ENCODE measurements at regions of chr4 and their contacts with region 1.

Region 1: DNA sequence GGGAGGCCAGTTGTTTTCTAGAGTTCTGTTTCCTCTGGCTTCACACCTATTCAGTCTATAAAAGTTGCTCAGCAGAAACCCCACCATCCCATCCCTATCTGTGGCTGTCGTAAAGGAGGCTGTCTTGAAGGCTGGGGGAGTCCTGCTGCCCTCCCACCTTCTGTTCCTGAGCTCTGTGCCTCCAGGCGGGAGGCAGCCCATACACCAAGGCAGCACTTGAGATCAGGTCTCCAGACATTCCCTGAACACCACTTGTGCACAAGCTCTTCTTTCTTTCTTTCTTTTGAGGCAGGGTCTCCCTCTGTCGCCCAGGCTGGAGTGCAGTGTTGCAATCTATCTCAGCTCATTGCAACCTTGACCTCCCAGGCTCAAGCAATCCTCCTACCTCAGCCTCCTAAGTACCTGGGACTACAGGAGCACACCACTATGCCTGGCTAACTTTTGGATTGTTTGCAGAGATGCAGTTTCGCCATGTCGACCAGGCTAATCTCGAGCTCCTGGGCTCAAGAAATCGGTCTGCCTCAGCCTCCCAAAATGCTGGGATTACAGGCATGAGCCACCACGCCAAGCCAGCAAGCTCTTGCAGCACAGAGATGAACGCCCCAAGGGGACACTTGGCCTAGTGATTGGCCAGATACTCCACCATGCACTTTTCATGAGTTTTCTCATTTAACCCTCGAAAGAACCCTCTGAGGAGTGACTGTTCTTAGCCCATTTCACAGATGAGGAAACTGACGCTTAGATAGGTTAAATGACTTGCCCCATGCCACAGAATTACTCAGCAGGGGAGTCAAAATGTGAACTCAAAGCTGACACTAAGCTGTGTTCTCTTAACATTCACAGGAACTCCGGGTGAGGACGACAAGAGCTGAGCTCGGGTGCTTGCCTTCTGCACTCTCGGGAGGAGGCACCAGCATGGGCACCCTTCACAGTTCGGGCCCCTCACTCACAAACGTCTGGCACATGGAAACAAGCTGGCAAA is 55.8 kb upstream of the ENPP6 start:
- DNase-seq: peak in 1 of 5 donors; percentile 8
- H3K4me3 ChIP-seq: no peak overlapping the region
- H3K27ac ChIP-seq: no peak overlapping the region
- H3K4me1 ChIP-seq: no peaks in the 10 kb centered on the region
- H3K27me3 ChIP-seq: no peaks in the 10 kb centered on the region
- CTCF ChIP-seq: no peak

Region 2: GRCh38 chr4:184400375-184400870 is 127.0 kb after region 1 on chr4:
- intact Hi-C with region 1: no loop called
- DNase-seq: no peak
- H3K4me3 ChIP-seq: no peak overlapping the region
- H3K27ac ChIP-seq: no peak overlapping the region
- H3K4me1 ChIP-seq: no peaks in the 10 kb centered on the region
- H3K27me3 ChIP-seq: no peaks in the 10 kb centered on the region
- CTCF ChIP-seq: no peak

Region 3: GRCh38 chr4:184544788-184545409 is 271.4 kb after region 1 on chr4:
- intact Hi-C with region 1: loop called (anchors 10 kb)
- DNase-seq: no peak
- H3K4me3 ChIP-seq: no peak overlapping the region
- H3K27ac ChIP-seq: no peak overlapping the region
- H3K4me1 ChIP-seq: no peaks in the 10 kb centered on the region
- H3K27me3 ChIP-seq: no peaks in the 10 kb centered on the region
- CTCF ChIP-seq: no peak

Measured in kidney (tissue), 22 donors.